GM23248 (cell line): ENCODE measurements at regions of chr10 and their contacts with region 1.

Region 1: GRCh38 chr10:17737027-17737965 is 14.7 kb upstream of the TMEM236 start:
- DNase-seq: peak; percentile 65
- H3K4me3 ChIP-seq: no peak overlapping the region
- H3K27ac ChIP-seq: no peak overlapping the region
- H3K4me1 ChIP-seq: no peaks in the 10 kb centered on the region
- H3K27me3 ChIP-seq: no peaks in the 10 kb centered on the region

Region 2: GRCh38 chr10:17607603-17608332 is 129.5 kb before region 1 on chr10:
- in situ Hi-C with region 1: loop called (anchors 10 kb)
- DNase-seq: peak; percentile 75
- H3K4me3 ChIP-seq: peak overlapping the region; percentile 24; the same call in 1 of the 2 replicates
- H3K27ac ChIP-seq: no peak overlapping the region
- H3K4me1 ChIP-seq: no peaks in the 10 kb centered on the region
- H3K27me3 ChIP-seq: no peaks in the 10 kb centered on the region

Region 3: GRCh38 chr10:18359812-18360211 is 622.5 kb after region 1 on chr10:
- in situ Hi-C with region 1: no loop called
- DNase-seq: no peak
- H3K4me3 ChIP-seq: no peak overlapping the region
- H3K27ac ChIP-seq: no peak overlapping the region
- H3K4me1 ChIP-seq: no peaks in the 10 kb centered on the region
- H3K27me3 ChIP-seq: no peaks in the 10 kb centered on the region

Region 4: GRCh38 chr10:18463673-18464211 is 726.4 kb after region 1 on chr10:
- in situ Hi-C with region 1: no loop called
- DNase-seq: no peak
- H3K4me3 ChIP-seq: no peak overlapping the region
- H3K27ac ChIP-seq: no peak overlapping the region
- H3K4me1 ChIP-seq: no peaks in the 10 kb centered on the region
- H3K27me3 ChIP-seq: no peaks in the 10 kb centered on the region